GM18951 (cell line): ENCODE measurements at regions of chr3 and their contacts with region 1.

Region 1: DNA sequence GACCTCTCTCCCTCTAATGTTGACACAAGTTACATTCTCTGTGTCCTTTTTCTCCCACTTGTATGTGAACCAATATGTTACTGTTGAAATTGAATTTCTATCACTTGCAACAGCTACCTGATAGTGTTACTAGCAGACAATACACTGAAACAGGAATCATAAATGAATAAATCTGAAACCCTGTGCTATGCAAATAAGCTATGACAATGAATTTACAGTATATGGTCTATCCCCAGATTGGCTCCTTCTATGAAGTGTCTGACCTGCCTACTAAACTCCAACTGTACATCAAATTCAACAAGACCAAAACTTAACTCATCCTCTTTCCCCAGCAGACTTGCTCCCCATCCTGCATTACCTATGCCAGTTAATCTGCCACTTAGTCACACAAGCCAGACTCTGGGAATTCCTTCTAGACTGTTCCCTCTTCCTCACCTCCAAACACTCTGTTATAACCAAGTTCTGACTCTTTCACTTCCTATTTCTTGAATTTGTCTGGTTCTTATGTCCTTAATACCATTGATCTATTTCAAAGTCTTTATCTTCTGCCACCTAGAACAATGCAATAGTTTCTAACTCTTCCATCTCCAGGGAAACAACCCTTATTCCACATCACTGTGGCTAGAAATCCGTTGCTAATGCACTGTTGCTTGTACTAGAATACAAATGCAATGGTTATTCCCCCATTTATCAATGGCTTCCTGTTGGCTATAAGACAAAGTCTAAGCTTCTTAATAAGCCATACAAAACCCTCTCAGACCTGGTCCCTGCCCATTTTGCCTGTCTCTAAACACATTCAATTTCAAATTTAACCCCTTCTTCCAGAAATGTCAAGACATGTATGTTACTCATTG is 13.4 kb upstream of the ZNF639 start:
- POLR2A ChIP-seq: no peak

Region 2: GRCh38 chr3:179015551-179016020 is 293.9 kb before region 1 on chr3:
- in situ Hi-C with region 1: loop called (anchors 10 kb)
- POLR2A ChIP-seq: no peak

Region 3: DNA sequence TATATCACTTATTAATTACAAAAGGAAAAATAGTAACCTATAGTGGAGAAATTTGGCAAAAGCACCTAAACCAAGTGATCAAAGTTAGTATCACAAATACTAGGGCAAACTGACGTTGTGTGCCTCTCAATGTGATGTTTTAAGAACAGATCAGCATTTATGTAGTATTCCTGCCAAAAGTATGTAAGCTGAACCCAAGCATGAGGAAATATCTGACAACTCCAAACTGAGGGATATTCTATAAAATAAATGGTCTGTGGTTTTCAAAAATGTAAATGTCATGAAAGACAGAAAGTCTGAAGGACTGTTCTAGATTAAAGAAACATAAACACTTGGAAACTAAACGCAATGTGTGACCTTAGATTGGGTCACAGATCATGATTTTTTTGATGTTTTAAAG is 195.5 kb before region 1 on chr3:
- in situ Hi-C with region 1: loop called (anchors 10 kb)
- POLR2A ChIP-seq: no peak

Region 4: DNA sequence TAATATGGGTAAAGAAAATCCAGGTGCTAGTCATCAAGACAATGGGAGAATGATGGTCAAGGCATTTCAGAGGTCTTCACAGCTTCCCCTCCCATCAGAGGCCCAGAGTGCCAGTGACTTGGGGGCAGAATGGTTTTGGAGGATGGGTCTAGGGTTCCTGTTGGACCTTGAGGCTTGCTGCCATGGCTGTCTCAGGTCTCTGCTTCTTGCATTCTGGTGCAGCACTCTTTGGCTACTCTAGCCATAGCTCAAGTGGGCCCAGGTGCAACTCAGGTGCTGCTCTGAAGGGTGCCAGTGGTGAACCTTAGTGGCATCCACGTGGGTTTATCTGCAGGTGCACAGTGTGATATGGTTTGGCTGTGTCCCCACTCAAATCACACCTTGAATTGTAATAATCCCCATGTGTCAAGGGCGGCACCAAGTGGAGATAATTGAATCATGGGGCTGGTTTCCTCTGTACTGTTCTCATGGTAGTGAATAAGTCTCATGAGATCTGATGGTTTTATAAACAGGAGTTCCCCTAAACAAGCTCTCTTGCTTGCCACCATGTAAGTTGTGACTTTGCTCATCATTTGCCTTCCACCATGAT is 775.8 kb after region 1 on chr3:
- in situ Hi-C with region 1: no loop called
- POLR2A ChIP-seq: no peak